Aorta (tissue), 5 donors: ENCODE measurements at regions of chr11 and their contacts with region 1.

Region 1: GRCh38 chr11:14643697-14644225 is at the start of gene PDE3B:
- DNase-seq: peak; percentile 89 to 95
- ATAC-seq: peak; percentile 89
- H3K4me3 ChIP-seq: peak within 1 kb of the TSS; percentile 43 to 79
- H3K27ac ChIP-seq: peak within 1 kb of the TSS; percentile 67 to 69
- H3K4me1 ChIP-seq: peaks cover 0 to 5% of the 10 kb centered on the region in 2 donors
- H3K27me3 ChIP-seq: no peaks in the 10 kb centered on the region
- total RNA-seq, gene PDE3B: 12.3 to 15.1 TPM

Region 2: DNA sequence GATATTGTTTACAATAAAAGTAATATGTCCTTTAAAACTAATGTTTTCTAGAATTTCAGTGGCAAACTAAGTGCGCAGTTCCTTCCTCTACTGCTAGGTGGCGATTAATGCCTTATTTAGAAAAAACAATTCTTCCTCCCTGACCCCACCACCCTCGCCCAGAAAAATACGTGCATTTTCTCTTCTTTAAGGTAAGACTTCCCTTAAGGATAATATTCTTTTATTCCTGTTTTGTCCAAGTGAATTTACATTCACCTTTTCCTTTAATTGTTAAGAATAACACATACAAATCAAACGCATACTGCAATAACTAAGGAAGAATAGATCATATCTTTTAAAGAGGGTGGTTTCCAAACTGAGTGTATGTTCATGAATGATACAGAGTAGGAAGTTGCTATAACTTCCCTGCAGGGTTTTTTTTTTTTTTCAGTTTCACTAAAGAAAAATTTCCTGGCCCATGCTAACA is 106.6 kb before region 1 on chr11:
- intact Hi-C with region 1: loop called (anchors 5 kb)
- DNase-seq: peak in 1 of 2 donors; percentile 47
- ATAC-seq: peak; percentile 62
- H3K4me3 ChIP-seq: no peak overlapping the region
- H3K27ac ChIP-seq: no peak overlapping the region
- H3K4me1 ChIP-seq: peaks cover 0 to 3% of the 10 kb centered on the region in 2 donors
- H3K27me3 ChIP-seq: no peaks in the 10 kb centered on the region

Region 3: DNA sequence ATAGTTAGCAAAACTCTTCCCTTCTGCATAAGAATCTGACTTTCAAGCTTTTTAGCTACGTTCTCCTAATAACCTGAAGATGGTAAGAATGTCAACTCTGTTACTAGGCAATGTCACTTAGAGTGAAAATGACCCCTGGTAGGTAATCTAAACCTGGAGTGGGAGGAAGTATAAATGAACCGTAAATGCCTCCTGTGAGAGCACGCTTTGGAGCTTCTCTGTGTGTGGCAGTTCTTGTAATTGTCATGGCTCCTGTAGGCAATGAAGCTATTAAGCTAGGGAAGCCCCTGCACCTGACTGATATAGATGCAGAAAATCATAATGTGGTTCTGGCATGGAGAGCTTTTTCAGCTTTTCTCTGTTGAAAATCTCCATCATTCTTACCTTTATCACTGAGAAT is 299.0 kb after region 1 on chr11:
- intact Hi-C with region 1: no loop called
- DNase-seq: no peak
- ATAC-seq: no peak
- H3K4me3 ChIP-seq: no peak overlapping the region
- H3K27ac ChIP-seq: no peak overlapping the region
- H3K4me1 ChIP-seq: no peaks in the 10 kb centered on the region
- H3K27me3 ChIP-seq: no peaks in the 10 kb centered on the region